HEK293 (cell line): ENCODE measurements at regions of chr6 and their contacts with region 1.

Region 1: DNA sequence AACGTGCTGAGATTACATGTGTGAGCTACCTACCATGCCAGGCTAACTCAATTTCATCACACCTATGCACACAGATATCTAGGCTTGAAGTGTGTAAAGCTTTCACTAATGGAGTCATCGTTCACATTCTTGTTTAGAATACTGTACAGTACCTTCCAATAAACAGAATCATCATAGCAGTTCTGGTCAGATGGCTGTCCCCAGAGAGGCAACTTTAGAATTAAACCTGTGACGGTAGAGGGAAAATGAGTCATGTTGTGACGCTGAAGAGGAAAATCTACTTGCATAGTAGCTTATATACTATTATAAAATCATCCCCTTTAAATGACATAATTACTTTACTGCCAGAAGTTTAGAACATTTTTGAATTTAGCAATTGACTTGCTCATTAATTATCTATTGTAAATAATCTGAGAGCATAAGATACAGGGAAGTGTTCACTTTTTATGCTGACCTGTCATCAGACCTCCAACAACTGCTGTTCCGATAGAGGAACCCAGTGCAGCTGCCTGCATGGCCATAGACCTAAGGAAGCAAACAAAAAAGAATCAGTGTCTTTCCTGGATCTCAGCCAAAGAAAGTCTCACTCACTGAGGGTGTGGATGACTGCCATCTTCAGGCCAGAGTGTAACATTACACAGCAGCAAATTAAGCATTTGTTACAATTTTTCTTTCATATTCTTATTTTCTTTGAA is 29.8 kb downstream of the RHAG start:
- H3K4me3 ChIP-seq: no peak overlapping the region
- H3K27ac ChIP-seq: no peak overlapping the region
- H3K4me1 ChIP-seq: no peaks in the 10 kb centered on the region
- CTCF ChIP-seq: no peak

Region 2: DNA sequence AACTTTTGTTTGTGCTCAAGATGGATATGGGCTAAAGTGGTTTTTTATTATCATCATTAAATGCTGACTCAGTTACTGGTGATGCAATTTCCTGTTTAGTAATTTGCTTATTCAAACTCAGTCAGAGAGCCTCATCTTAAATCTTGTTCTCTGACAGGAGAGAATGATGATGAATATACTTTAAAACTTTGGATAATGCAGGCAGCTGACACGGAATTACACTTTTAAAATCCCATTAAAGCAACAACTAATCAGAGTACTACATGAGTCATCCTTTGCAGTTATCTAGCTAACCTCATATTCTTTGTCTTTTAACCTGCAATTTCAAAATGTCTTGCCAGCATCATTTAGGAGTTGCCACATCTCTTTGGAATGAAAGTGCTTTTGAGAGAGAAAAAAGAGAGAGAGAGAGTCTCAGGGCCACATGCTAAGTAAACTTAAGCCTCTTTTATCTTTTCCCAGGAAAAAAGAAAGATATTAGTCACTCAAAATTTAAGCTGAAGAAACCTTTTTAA is 65.6 kb before region 1 on chr6:
- CTCF ChIA-PET with region 1: interaction called, 14 read pairs
- POLR2A ChIA-PET with region 1: no interaction called
- H3K4me3 ChIP-seq: no peak overlapping the region
- H3K27ac ChIP-seq: peak overlapping the region; percentile 43; the same call in 1 of the 2 replicates
- H3K4me1 ChIP-seq: peaks cover 15% of the 10 kb centered on the region
- CTCF ChIP-seq: no peak

Region 3: DNA sequence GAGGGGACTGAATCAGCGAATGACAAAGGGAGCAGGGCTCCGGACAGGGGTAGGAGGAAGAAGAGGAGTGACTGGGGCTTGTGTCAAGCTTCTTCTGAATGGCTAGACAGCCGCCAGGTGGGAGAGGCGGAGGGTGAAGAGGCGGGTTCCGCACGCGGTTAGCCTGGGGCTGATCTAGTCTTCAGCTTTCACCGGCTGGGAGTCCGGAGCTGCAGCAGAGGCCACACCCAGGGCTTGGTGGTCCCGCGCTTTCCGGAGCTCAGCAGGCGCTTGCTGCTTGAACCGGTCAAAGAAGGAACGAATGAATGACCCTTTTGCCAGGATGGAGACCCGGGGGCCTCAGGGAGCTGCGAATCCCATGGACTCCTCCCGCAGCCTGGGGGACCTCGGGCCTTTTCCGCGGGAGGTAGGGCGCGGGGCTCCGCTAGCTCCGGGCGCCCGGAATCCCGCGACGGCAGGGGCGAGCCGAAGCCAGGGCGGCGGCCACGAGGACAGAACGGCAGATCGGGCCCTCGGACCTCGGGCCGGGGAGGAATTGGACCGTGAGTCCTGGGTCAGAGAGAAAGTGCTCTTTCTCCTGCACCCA is 56.3 kb before region 1 on chr6 and contains the start of gene C6orf141:
- CTCF ChIA-PET with region 1: interaction called, 30 read pairs
- POLR2A ChIA-PET with region 1: interaction called, 3 read pairs
- H3K4me3 ChIP-seq: peak within 1 kb of the TSS; percentile 75
- H3K27ac ChIP-seq: peak within 1 kb of the TSS; percentile 86
- H3K4me1 ChIP-seq: peaks cover 2% of the 10 kb centered on the region; the same call in 1 of the 2 replicates
- CTCF ChIP-seq: no peak; the same call in 1 of the 2 replicates

Region 4: DNA sequence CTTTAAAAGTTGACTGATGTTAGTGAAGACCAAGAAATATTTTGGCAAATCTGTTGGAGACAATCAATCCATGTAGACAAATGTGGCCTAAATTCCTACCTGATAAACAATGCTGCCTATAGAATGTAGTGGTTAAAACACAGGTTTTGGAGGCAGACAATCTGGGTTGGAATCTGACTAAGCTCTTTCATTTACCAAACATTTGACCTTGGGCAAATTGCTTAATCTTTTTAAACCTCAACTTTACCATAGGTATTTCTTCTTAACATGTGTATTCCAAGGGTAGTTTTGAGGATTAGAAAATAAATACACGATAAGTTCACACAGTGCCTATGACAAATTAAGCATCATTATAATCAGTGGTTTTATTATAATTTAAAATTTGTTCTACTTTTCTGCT is 18.3 kb after region 1 on chr6:
- CTCF ChIA-PET with region 1: interaction called, 13 read pairs
- POLR2A ChIA-PET with region 1: no interaction called
- H3K4me3 ChIP-seq: no peak overlapping the region
- H3K27ac ChIP-seq: no peak overlapping the region
- H3K4me1 ChIP-seq: no peaks in the 10 kb centered on the region
- CTCF ChIP-seq: no peak

Region 5: GRCh38 chr6:49772285-49772684 is 165.4 kb after region 1 on chr6:
- CTCF ChIA-PET with region 1: no interaction called
- POLR2A ChIA-PET with region 1: no interaction called
- H3K4me3 ChIP-seq: no peak overlapping the region
- H3K27ac ChIP-seq: no peak overlapping the region
- H3K4me1 ChIP-seq: no peaks in the 10 kb centered on the region
- CTCF ChIP-seq: no peak

Region 6: GRCh38 chr6:49849213-49849907 is 242.5 kb after region 1 on chr6:
- CTCF ChIA-PET with region 1: interaction called, 17 read pairs
- POLR2A ChIA-PET with region 1: no interaction called
- H3K4me3 ChIP-seq: no peak overlapping the region
- H3K27ac ChIP-seq: no peak overlapping the region
- H3K4me1 ChIP-seq: no peaks in the 10 kb centered on the region
- CTCF ChIP-seq: no peak